Aorta (tissue), 5 donors: ENCODE measurements at regions of chr2 and their contacts with region 1.

Region 1: GRCh38 chr2:69306822-69307578 is 80.0 kb downstream of the GFPT1 start:
- DNase-seq: peak; percentile 94 to 96
- ATAC-seq: peak; percentile 93
- H3K4me3 ChIP-seq: peak overlapping the region; percentile 49 to 73
- H3K27ac ChIP-seq: peak overlapping the region; percentile 58 to 66
- H3K4me1 ChIP-seq: peaks cover 3 to 4% of the 10 kb centered on the region in 2 donors
- H3K27me3 ChIP-seq: no peaks in the 10 kb centered on the region

Region 2: GRCh38 chr2:68837164-68837860 is 469.7 kb before region 1 on chr2:
- intact Hi-C with region 1: no loop called
- DNase-seq: peak; percentile 81 to 89
- ATAC-seq: peak; percentile 69
- H3K4me3 ChIP-seq: no peak overlapping the region
- H3K27ac ChIP-seq: no peak overlapping the region
- H3K4me1 ChIP-seq: no peaks in the 10 kb centered on the region
- H3K27me3 ChIP-seq: no peaks in the 10 kb centered on the region

Region 3: DNA sequence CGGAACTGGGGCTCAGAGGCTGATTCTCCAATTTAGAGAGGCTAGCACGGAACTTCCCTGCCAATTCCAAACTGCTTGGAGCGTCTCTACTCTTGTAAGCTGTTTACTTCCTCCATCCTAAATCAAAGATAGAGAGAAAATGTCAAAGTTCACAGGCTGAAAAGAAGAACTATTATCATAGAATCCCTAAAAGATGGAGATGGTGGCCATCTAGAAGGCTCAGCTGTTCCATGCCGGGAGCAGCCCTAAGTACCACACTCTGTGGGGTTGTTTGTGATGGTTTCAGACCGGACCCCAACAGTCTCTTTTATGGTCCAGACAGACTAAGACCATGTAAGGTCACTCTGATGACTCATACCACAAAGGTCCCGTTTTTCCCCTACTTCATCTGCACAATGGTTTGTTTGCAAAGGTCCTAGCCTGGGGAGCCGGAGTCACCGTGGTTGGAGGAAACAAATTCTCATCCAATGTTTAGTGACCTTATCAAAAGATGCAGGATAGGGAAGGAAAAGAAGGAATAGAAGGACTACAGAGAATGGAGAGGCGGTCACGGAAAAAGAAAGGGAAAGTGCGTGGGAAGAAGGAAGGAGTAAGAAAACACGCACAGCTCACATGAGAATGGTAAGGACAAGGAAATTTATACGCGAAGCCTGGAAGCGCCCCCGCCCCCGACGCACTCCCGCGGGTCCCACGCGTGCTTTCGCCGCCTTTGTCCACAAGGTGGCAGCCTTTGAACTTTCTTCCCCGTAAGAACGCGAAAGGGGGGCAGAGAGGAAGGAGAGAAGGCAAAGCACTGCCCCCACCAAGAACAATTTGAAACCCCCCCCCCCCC is 294.5 kb before region 1 on chr2:
- intact Hi-C with region 1: loop called (anchors 2 kb)
- DNase-seq: peak; percentile 79 to 93
- ATAC-seq: peak; percentile 77
- H3K4me3 ChIP-seq: peak overlapping the region; percentile 69 to 83
- H3K27ac ChIP-seq: peak overlapping the region in 1 of 2 donors; percentile 1
- H3K4me1 ChIP-seq: no peaks in the 10 kb centered on the region
- H3K27me3 ChIP-seq: no peaks in the 10 kb centered on the region

Region 4: GRCh38 chr2:69077252-69077953 is 229.6 kb before region 1 on chr2:
- intact Hi-C with region 1: loop called in 1 of 2 experiments (anchors 5 kb)
- DNase-seq: no peak
- ATAC-seq: no peak
- H3K4me3 ChIP-seq: no peak overlapping the region
- H3K27ac ChIP-seq: peak overlapping the region; percentile 80 to 82
- H3K4me1 ChIP-seq: peaks cover 6 to 11% of the 10 kb centered on the region in 2 donors
- H3K27me3 ChIP-seq: no peaks in the 10 kb centered on the region

Region 5: GRCh38 chr2:69149631-69150215 is 157.3 kb before region 1 on chr2:
- intact Hi-C with region 1: loop called in 1 of 2 experiments (anchors 5 kb)
- DNase-seq: peak; percentile 81 to 89
- ATAC-seq: peak; percentile 54
- H3K4me3 ChIP-seq: no peak overlapping the region
- H3K27ac ChIP-seq: peak overlapping the region in 1 of 2 donors; percentile 87
- H3K4me1 ChIP-seq: peaks cover 2 to 10% of the 10 kb centered on the region in 2 donors
- H3K27me3 ChIP-seq: no peaks in the 10 kb centered on the region

Region 6: DNA sequence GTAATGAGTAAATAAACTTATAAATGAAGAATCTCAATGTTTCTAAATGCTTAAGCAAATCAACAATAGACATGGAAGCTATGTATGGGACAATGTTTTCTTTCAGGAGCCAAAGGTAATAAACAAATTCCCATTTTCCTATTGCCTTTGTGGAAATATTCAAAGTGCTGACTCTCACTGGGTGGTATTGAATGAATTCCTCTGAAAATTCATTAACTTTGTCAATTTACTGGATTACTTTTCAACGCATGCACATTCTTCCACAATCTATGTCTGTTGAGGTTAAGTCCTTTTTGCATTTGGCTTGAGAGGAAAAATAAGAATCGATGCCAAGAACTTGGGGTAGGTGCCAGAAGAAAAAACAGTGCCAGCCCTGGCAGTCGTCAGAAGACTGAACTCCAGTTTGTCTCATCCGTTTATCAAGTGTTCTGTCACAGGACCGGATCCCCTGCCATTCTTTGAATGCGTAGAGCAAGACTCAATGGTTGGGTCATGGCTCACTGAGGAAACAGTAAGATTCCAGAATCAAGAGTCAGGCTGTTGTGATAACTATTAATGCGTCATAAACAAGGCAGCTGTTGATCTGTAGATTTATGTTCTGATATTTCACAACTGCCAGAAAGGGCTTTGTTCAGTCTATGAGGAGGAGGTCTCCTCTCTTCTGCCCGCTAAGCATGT is 53.2 kb before region 1 on chr2:
- intact Hi-C with region 1: loop called (anchors 5 to 10 kb)
- DNase-seq: peak in 1 of 2 donors; percentile 58
- ATAC-seq: peak; percentile 90
- H3K4me3 ChIP-seq: no peak overlapping the region
- H3K27ac ChIP-seq: peak overlapping the region in 1 of 2 donors; percentile 72
- H3K4me1 ChIP-seq: peaks cover 0 to 6% of the 10 kb centered on the region in 2 donors
- H3K27me3 ChIP-seq: no peaks in the 10 kb centered on the region